Pancreas (tissue), 10 donors: ENCODE measurements at regions of chr10 and their contacts with region 1.

Region 1: GRCh38 chr10:118241229-118242137 is 100.6 kb downstream of the FAM204A start:
- DNase-seq: peak; percentile 54 to 89 (median 80)
- ATAC-seq: peak; percentile 48 to 93 (median 88)
- H3K4me3 ChIP-seq: no peak overlapping the region
- H3K27ac ChIP-seq: no peak overlapping the region
- H3K4me1 ChIP-seq: no peaks in the 10 kb centered on the region
- H3K27me3 ChIP-seq: peaks cover 0 to 56% (median 7%) of the 10 kb centered on the region in 4 donors
- CTCF ChIP-seq: peak; percentile 90 to 95 (median 92)

Region 2: GRCh38 chr10:117496616-117497028 is 744.9 kb before region 1 on chr10:
- intact Hi-C with region 1: loop called in 2 of 3 experiments (anchors 5 kb)
- DNase-seq: peak; percentile 58 to 91 (median 82)
- ATAC-seq: peak; percentile 92 to 100 (median 98)
- H3K4me3 ChIP-seq: no peak overlapping the region
- H3K27ac ChIP-seq: no peak overlapping the region
- H3K4me1 ChIP-seq: no peaks in the 10 kb centered on the region
- H3K27me3 ChIP-seq: peaks cover 0 to 14% (median 0%) of the 10 kb centered on the region in 4 donors
- CTCF ChIP-seq: peak; percentile 84 to 98 (median 92)

Region 3: DNA sequence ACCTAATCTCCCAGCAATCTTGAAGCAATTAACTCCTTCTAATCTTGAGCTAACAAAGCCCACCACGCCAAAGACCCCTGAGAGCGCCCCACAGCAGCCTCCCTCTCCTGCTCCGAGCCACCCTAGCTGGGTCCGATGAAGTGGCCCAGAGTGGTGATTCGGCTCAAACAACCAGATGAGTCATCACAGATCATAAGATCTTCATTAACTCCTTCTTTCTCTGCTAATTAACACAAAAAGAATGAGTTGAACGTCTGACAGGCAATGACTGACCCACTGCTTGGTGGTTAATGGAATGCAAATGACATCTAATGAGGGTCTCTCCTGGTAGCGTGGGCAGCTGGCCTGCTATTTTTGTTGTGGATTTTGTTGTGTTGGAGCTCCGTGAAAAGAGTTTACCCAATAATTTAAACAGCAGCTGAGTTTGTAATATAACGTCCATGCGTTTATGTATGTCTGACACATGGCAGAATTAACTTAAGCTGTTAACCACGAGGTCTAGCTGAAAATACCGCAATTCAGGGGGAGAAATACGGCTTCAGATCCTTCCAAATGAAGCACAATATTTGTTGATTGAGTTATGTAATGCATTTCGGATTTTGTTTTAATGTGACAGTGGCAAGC is 356.2 kb before region 1 on chr10:
- intact Hi-C with region 1: loop called in 1 of 3 experiments (anchors 5 kb)
- DNase-seq: no peak
- ATAC-seq: no peak
- H3K4me3 ChIP-seq: no peak overlapping the region
- H3K27ac ChIP-seq: no peak overlapping the region
- H3K4me1 ChIP-seq: no peaks in the 10 kb centered on the region
- H3K27me3 ChIP-seq: no peaks in the 10 kb centered on the region
- CTCF ChIP-seq: no peak

Region 4: GRCh38 chr10:119341459-119342301 is 1100.2 kb after region 1 on chr10:
- intact Hi-C with region 1: no loop called
- DNase-seq: peak in 1 of 6 donors; percentile 10
- ATAC-seq: peak in 2 of 4 donors; percentile 20 to 31
- H3K4me3 ChIP-seq: no peak overlapping the region
- H3K27ac ChIP-seq: no peak overlapping the region
- H3K4me1 ChIP-seq: no peaks in the 10 kb centered on the region
- H3K27me3 ChIP-seq: no peaks in the 10 kb centered on the region
- CTCF ChIP-seq: no peak